Activated T-helper 1 cell treated with anti-CD3 and anti-CD28 coated beads, Interleukin-12 subunit alpha, Interleukin-12 subunit beta, Interleukin-2, Interleukin-4 antibody, amounts not matched to agents 30 ng/mL and 10 ng/mL and 1 ng/mL, durations not matched to agents 14 hours and 24 hours and 36 hours (primary cell): ENCODE measurements at regions of chr10 and their contacts with region 1.

Region 1: DNA sequence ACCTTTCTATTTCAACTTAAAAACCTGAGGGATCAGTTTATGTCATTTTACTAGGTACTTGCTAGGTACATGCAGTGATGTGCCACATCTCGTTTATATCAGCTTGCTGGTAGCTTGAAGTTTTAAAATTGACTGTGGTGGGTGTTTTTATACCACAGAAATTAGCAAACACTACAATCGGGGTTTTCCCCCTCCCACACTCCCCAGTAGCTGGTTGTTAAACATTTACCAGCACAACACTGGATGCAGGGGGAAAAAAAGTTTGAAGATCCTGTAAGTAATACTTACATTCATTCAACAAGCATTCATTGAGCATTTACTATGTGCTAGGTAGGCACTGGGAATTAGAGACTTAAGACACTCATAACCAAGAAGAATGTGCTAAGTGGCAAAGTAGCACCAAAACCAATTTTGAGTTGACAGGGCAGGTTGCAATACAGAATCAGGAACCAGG is 32.6 kb downstream of the USP6NL start:
- DNase-seq: no peak
- H3K4me3 Mint-ChIP-seq: no peak overlapping the region
- H3K27ac Mint-ChIP-seq: no peak overlapping the region
- H3K4me1 Mint-ChIP-seq: peaks cover 22% of the 10 kb centered on the region
- H3K27me3 Mint-ChIP-seq: peaks cover 11% of the 10 kb centered on the region

Region 2: DNA sequence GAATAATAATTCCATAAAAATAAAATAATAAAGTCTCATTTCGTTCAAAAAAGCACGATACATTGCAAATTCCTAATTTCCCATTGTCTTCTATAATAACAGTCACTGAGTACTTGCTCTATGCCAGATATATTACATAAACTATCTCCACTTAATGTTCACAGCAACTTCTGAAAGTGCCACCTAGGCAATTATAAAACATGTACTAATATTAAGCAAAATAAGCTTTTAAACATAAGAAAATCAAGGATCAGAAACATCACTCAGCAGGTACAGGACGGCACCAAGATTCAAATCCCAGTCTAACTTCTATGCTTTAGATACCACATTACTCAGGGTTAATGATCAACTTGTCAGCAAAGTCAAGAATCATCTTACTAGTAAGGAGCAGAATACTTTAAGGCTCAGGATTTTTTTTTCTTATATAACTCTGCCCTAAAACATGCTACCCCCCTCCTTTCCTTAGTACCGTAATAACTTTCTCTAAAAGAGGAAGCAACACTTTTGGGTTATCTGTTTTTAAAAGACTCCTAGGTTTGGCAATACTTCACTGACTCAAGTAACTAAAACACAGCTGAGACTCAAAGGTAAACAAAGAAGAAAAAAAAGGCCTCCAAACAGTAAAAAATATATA is 18.6 kb before region 1 on chr10:
- intact Hi-C with region 1: no loop called
- DNase-seq: no peak
- H3K4me3 Mint-ChIP-seq: no peak overlapping the region
- H3K27ac Mint-ChIP-seq: no peak overlapping the region
- H3K4me1 Mint-ChIP-seq: peaks cover 12% of the 10 kb centered on the region
- H3K27me3 Mint-ChIP-seq: peaks cover 17% of the 10 kb centered on the region

Region 3: GRCh38 chr10:11595395-11595692 is 16.5 kb after region 1 on chr10:
- intact Hi-C with region 1: no loop called
- DNase-seq: no peak
- H3K4me3 Mint-ChIP-seq: no peak overlapping the region
- H3K27ac Mint-ChIP-seq: no peak overlapping the region
- H3K4me1 Mint-ChIP-seq: no peaks in the 10 kb centered on the region
- H3K27me3 Mint-ChIP-seq: peaks cover 11% of the 10 kb centered on the region

Region 4: DNA sequence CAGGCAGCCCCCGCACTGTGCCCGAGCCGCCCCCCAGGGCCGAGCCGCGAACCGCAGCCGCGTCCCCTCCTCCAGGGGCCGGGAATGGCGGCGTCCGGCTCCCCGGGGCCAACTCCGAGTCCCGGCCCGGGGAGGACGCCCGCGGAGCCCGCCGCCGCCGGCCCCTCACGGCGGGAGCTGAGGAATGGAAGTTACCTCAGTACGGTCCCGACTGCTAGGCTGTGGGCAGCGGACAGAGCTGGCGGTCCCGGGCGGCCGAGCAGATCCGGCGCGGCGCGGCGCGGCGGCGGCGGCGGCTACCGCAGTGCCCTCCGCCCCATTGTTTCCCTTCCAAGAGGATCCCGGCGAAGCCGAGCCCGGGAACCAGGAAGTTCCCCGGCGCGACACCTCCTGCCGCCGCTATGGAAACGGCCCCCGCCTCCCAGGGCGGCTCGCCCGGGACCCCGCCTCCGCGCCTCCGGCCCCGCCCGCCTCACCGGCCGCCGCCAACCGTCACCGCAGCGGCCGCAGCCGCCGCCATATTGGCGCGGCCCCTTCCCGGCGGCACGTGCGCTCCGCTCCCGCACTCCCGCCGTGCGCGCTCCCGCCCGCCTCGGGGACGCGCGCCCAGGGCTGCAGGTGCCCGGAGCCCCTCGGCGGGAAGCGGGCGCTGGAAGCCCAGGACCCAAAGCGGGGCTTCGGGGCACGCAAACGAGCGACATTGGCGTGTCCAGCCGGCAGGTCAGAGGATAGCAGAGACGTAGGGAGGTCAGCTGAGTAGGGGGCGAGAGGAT is 32.6 kb after region 1 on chr10 and contains the start of gene USP6NL:
- intact Hi-C with region 1: loop called (anchors 1 kb)
- DNase-seq: peak; percentile 48
- H3K4me3 Mint-ChIP-seq: peak within 1 kb of the TSS; percentile 89
- H3K27ac Mint-ChIP-seq: peak within 1 kb of the TSS; percentile 52
- H3K4me1 Mint-ChIP-seq: peaks cover 27% of the 10 kb centered on the region
- H3K27me3 Mint-ChIP-seq: peaks cover 44% of the 10 kb centered on the region
- total RNA-seq, gene USP6NL: 0.64 and 0.78 TPM in 2 replicates